ENCODE measurements at regions of chr2 and their contacts with region 1.

Region 1: DNA sequence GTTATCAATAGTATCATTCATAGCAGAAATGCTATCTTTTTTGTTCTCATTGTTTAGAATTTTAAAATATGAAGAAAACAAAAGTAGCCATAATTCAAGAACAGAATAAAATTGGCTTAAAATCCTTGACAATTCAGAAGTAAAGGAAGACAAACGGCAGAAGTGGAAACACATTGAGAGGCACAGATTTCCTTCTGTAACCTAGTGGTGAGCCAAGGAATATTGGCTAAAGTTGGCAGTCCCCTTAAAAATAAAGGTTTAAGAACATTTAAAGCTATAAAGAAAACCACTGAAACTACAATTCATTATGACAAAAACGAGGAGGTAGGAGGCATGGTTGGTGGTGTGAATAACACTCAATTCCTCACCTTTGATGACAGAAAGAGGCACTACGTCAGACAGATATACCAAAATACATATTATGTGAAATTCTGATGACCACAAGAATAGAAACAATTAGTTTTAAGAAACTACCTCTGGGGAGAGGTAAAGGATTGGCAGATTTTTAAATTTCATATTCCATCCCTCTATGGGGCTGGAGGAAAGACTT is 42.3 kb downstream of the SFT2D3 start:
- DNase-seq: no peak
- ATAC-seq: no peak
- H3K4me3 ChIP-seq: no peak overlapping the region
- H3K27ac ChIP-seq: no peak overlapping the region
- H3K4me1 ChIP-seq: no peaks in the 10 kb centered on the region
- H3K27me3 ChIP-seq: no peaks in the 10 kb centered on the region
- CTCF ChIP-seq: peak; percentile 3

Region 2: DNA sequence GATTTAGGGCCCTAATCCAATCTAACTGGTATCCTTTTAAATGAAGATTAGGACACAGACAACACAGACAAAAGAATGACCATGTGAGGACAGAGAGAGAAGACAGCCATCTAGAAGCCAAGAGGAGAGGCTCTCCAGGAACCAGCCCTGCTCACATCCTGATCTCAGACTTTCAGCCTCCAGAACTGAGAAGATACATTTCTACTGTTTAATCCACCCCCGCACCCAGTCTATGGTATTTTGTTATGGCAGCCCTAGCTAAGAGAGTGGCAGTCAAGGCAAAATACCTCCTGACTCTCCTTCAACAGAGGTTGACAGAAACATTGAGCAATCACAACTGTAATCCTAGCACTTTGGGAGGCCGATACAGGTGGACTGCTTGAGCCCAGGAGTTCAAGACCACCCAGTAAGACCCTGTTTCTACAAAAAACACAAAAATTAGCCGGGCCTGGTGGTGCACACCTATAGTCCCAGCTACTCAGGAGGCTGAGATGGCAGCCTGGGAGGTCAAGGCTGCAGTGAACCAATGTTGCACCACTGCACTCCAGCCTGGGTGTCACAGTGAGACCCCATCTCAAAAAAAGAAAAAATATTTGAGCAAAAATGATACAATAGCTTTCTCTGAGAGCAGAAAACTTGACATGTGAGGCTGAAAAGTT is 32.7 kb after region 1 on chr2:
- intact Hi-C with region 1: loop called in 1 of 2 experiments (anchors 5 kb)
- DNase-seq: no peak
- ATAC-seq: peak; percentile 51 to 79 (median 65)
- H3K4me3 ChIP-seq: no peak overlapping the region
- H3K27ac ChIP-seq: peak overlapping the region; percentile 36
- H3K4me1 ChIP-seq: peaks cover 21% of the 10 kb centered on the region
- H3K27me3 ChIP-seq: no peaks in the 10 kb centered on the region
- CTCF ChIP-seq: no peak

Region 3: DNA sequence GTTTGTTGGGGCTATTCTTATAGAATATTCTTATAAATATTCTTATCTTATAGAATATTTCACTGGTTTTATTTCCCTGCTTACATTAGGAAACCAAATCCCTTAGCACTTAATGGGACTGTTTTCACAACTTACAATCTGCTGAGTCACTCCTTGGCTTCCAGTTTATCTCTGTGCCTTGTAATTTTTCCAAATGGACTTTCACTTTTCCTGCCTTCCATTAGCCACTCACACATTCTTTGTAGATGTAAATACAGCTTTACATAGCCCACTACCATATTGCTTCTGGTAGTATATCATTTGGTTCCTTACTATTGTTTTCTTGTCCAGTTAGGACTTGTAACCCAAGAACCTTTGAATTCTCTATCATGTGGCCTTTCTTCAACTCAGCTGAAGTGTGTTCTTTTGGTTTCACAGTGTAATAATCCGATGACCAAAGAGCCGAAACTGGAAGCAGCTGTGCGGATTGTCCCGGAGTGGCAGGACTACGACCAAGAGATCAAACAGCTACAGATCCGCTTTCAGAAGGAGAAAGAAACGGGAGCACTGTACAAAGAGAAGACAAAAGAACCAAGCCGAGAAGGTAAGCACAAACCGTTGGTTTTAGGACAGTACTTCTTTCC is 443.6 kb after region 1 on chr2:
- intact Hi-C with region 1: no loop called
- DNase-seq: peak in 1 of 2 donors; percentile 27
- ATAC-seq: peak; percentile 87 to 91 (median 90)
- H3K4me3 ChIP-seq: peak overlapping the region; percentile 62
- H3K27ac ChIP-seq: peak overlapping the region; percentile 85
- H3K4me1 ChIP-seq: peaks cover 22% of the 10 kb centered on the region
- H3K27me3 ChIP-seq: no peaks in the 10 kb centered on the region
- CTCF ChIP-seq: no peak

Measured in psoas muscle (tissue), 8 donors.